ENCODE measurements at regions of chr2 and their contacts with region 1.

Region 1: GRCh38 chr2:172667581-172668325 is 67.9 kb upstream of the RAPGEF4 start:
- DNase-seq: no peak

Region 2: DNA sequence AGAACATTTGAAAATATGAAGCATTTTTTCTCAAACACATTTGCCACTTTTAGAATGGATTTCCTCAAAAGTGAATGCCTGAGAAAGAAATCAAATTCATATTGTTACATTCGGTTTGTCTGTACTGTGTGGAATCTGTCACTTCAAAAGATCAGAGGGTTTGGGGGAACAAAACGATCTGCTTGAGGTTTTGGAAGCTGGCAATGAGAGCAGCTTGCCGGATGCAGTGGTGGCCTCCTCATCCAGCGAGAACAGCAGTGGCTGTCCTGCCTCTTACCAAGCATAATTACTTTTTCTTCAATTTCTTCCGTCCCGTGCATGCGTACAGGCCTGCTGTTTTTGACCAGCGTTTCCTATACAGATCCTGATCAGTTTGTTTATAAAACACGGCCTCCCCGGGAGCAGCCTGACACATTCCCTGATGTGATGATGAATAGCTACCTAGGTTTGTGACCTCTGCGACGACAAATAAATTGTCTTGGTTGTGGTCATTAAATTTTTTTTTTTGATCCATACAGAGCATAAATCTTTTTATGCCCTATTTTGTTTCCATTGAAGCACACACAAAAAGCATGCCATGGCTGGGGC is 195.2 kb before region 1 on chr2:
- in situ Hi-C with region 1: no loop called
- DNase-seq: no peak

Region 3: DNA sequence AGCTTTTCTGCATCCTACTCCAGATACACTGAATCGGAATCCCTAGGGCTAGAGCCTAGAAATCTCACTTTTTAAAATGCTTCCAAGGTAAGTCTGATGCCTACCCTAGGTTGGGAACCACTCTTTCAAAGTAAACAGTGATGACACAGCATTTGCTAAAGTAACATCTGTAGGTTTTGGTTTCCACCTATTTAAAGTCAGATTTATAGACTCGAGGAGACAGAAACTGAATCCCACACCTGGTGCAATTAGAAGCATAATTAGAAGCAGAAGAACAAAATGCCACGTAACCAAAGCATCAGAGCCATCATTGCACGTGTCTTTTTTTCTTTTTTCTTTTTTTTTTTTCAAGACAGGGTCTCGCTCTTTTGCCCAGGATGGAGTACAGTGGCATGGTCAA is 71.0 kb before region 1 on chr2:
- in situ Hi-C with region 1: loop called (anchors 10 kb)
- DNase-seq: no peak

Measured in Caki2 (cell line).